H1 (cell line): ENCODE measurements at regions of chr15 and their contacts with region 1.

Region 1: DNA sequence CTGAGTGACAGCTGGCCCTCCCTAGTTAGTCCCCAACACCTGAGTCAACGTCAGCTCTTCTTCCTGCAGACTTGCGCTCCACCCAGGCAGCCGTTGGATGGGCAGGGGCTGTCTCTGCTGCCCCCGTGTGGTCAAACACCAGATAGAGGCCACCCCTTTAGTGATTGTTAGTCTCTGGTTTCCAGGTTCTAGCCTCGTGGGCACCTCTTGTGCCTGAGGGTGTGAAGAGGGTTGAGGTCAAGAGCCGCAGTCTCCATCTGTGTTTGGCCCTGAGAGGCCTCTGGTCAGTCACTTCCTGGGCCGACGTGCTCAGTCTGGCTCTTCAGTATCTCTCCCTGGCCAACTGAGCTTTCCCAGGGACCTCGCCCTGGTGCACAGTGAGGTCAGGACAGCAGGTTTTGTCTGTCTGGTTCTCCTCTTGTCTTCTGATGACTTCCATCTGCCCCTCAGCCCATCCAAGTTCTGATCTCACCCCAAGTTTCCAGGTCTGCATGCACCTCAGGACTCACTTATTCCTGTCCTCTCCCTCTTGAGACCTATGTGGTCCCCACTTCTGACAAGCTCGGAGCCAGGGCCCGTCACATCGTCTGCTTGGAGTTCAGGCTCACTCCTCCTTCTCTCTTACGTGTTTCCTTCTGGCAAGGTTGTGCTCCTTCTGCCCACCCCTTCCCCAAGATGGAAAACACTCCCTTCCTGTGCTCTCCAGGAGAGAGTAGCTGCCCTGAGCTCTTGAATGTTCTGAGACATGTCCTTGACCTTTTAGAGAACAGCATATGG is 20.9 kb downstream of the CD276 start:
- DNase-seq: peak; percentile 34 to 87
- H3K4me3 ChIP-seq: no peak overlapping the region
- H3K27ac ChIP-seq: no peak overlapping the region; the same call in 1 of the 2 replicates
- H3K4me1 ChIP-seq: no peaks in the 10 kb centered on the region
- H3K27me3 ChIP-seq: no peaks in the 10 kb centered on the region
- CTCF ChIP-seq: peak; percentile 90 to 95 (median 95)
- EP300 ChIP-seq: no peak
- POLR2A ChIP-seq: no peak
- RAD21 ChIP-seq: peak; percentile 78 to 83

Region 2: DNA sequence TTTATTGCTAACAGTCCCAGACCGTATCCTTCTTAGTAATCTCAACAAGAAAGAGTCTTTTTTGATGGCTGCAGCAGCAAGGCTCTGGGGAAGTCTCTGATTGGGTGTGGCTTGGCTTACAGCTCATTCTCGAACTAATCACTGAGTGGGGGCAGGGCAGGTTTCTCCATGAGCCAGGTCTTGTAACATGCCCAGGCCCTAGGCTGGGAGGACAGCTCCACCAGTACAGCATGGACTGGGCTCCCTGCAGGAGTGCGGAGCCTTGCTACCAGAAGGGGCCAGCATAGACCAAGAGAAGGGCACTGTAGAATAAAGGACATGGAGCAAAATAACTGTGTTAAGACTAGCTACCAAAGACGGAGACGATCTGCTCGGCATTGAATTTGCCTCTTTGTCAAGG is 13.7 kb before region 1 on chr15:
- CTCF ChIA-PET with region 1: interaction called, 496 read pairs
- POLR2A ChIA-PET with region 1: interaction called, 93 read pairs
- DNase-seq: no peak
- H3K4me3 ChIP-seq: no peak overlapping the region
- H3K27ac ChIP-seq: no peak overlapping the region
- H3K4me1 ChIP-seq: peaks cover 1 to 29% (median 10%) of the 10 kb centered on the region in 4 experiments
- H3K27me3 ChIP-seq: no peaks in the 10 kb centered on the region
- CTCF ChIP-seq: peak; percentile 22 to 43 (median 42)
- EP300 ChIP-seq: no peak
- POLR2A ChIP-seq: no peak
- RAD21 ChIP-seq: peak; percentile 46 to 67

Region 3: DNA sequence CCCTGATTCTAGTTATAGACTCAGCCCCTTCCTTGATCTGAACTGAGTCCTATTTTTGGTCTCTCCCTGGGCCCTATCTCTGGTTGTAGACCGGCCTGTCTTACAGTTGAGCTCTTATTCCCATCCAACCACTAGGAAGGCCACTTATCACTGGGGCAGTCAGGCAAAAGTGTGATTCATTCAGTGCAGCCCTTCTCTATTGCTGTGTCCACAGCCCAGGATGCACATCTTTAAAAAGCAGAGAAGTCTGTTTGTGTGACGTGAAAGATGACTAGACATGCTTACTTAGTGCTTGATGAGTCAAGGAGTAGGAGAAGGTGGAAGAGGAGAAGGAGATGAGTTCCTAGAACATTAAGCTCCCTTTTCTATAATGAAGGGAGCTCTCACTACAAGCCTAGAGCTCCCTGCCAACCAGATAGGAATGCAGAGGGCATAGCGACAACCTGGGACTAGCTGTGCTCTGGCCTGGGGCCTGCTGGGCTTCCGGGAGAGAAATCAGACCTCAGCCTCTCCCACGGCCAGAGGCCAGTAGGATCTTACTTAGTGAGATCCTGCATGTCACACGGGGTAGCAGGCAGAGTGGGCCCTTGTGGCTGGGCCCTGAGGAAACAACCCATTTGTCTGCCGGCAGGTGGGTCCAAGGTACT is 22.4 kb after region 1 on chr15:
- CTCF ChIA-PET with region 1: interaction called, 187 read pairs
- POLR2A ChIA-PET with region 1: no interaction called
- DNase-seq: no peak
- H3K4me3 ChIP-seq: no peak overlapping the region
- H3K27ac ChIP-seq: no peak overlapping the region
- H3K4me1 ChIP-seq: no peaks in the 10 kb centered on the region; a peak in 1 of 7 replicates
- H3K27me3 ChIP-seq: no peaks in the 10 kb centered on the region
- CTCF ChIP-seq: no peak
- EP300 ChIP-seq: no peak
- POLR2A ChIP-seq: no peak
- RAD21 ChIP-seq: no peak

Region 4: GRCh38 chr15:73732930-73733329 is 27.9 kb after region 1 on chr15:
- CTCF ChIA-PET with region 1: interaction called, 29 read pairs
- POLR2A ChIA-PET with region 1: no interaction called
- DNase-seq: no peak
- H3K4me3 ChIP-seq: no peak overlapping the region
- H3K27ac ChIP-seq: no peak overlapping the region
- H3K4me1 ChIP-seq: no peaks in the 10 kb centered on the region; a peak in 2 of 7 replicates
- H3K27me3 ChIP-seq: no peaks in the 10 kb centered on the region
- CTCF ChIP-seq: no peak
- EP300 ChIP-seq: no peak
- POLR2A ChIP-seq: no peak
- RAD21 ChIP-seq: no peak

Region 5: DNA sequence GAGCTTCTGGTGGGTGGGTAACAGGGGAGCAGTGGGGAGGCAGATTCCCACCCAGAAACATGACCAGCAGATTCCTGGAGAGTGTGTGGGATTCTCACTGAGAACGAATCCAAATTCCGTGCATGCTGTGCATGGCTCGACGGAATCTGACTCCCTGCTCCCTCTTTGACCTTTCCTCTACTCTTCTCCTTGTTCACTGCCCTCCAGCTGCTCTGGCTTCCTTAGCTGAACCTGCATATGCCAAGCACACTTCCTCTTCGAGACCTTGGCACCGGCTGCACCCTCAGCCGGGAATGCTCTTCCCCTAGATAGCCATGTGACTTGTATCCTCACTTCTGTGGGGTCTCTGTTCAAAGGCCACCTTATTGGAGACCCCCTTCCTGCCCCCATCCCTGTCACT is 41.8 kb after region 1 on chr15:
- CTCF ChIA-PET with region 1: interaction called, 13 read pairs
- POLR2A ChIA-PET with region 1: no interaction called
- DNase-seq: no peak
- H3K4me3 ChIP-seq: no peak overlapping the region
- H3K27ac ChIP-seq: no peak overlapping the region
- H3K4me1 ChIP-seq: peaks cover 8 to 33% (median 17%) of the 10 kb centered on the region in 4 experiments
- H3K27me3 ChIP-seq: peaks cover 0 to 8% (median 2%) of the 10 kb centered on the region in 4 experiments; a peak in 3 of 7 replicates
- CTCF ChIP-seq: no peak
- EP300 ChIP-seq: no peak
- POLR2A ChIP-seq: no peak
- RAD21 ChIP-seq: no peak